Right lobe of liver (tissue), 6 donors: ENCODE measurements at regions of chr14 and their contacts with region 1.

Region 1: GRCh38 chr14:61553725-61554641 is 141.3 kb upstream of the HIF1A start:
- DNase-seq: peak; percentile 65 to 78 (median 76)
- ATAC-seq: peak; percentile 68 to 84 (median 77)
- H3K4me3 ChIP-seq: peak overlapping the region in 1 of 3 donors; percentile 31
- H3K27ac ChIP-seq: peak overlapping the region; percentile 63 to 84 (median 73)
- H3K4me1 ChIP-seq: peaks cover 0 to 40% (median 11%) of the 10 kb centered on the region in 4 donors
- H3K27me3 ChIP-seq: no peaks in the 10 kb centered on the region
- CTCF ChIP-seq: no peak
- POLR2A ChIP-seq: no peak

Region 2: DNA sequence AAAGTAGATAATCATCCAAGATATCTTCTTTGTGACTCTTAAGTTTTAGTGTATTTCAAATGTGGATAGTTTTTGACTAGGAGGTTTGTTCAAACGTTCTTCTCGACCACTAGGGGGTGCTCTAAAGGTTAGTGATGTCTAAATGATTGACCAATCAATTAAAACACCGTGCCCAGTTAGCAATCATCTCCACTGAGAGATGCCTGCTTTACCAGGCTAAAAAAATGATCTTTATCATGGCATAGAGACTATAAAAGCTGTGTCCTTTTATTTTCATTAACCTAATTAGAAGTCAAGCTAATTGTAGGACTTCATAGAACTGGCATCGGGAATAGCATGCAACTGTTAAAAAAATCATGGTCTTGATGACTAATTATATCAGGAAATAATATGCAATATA is 78.7 kb before region 1 on chr14:
- intact Hi-C with region 1: loop called in 1 of 2 experiments (anchors 10 kb)
- DNase-seq: peak in 1 of 3 donors; percentile 33
- ATAC-seq: peak; percentile 36 to 61 (median 54)
- H3K4me3 ChIP-seq: no peak overlapping the region
- H3K27ac ChIP-seq: peak overlapping the region in 1 of 3 donors; percentile 89
- H3K4me1 ChIP-seq: peaks cover 2 to 32% (median 12%) of the 10 kb centered on the region in 4 donors
- H3K27me3 ChIP-seq: no peaks in the 10 kb centered on the region
- CTCF ChIP-seq: peak; percentile 80 to 84 (median 82)
- POLR2A ChIP-seq: no peak